ENCODE measurements at regions of chr22 and their contacts with region 1.

Region 1: DNA sequence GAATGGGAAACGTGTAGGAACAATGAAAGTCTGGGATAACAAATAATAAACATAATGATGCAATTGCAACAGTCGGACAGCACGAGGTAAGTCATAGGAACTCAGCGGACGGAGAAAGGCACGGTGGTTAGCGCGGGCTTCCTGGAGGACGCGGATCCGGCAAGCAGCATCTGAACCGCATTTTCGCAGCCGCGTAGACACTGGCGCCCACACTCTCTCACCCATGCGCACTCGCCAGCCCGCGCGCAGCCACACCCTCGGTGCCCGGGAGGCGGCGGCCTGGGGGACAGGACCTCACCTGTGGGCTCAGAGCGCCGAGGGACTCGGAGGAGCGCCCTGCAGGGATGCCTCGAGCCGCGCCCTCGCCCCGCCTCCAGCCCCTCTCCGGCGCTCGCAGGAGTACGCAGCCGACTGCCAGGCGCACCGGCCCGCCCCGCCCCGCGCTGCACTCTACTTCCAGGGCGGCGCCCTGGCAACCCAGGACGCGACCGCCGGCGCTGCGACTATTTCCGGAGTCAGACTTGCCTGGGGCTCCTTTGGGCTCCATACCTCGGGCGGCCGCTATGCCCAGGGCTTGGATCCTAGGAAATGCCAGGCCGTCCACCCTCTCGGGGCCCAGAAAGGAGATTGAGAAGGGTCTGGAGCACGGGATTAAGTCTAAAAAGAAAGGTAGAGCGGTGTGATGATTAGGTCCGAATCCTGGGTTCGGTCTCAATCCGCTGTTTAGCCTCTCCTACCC is at the start of gene TTLL1:
- DNase-seq: peak; percentile 84
- H3K4me3 ChIP-seq: peak within 1 kb of the TSS; percentile 38 to 91 (median 74)
- H3K27ac ChIP-seq: peak within 1 kb of the TSS; percentile 33
- H3K4me1 ChIP-seq: peaks cover 4% of the 10 kb centered on the region
- H3K27me3 ChIP-seq: no peaks in the 10 kb centered on the region
- CTCF ChIP-seq: peak in 1 of 2 donors; percentile 4
- POLR2A ChIP-seq: peak; percentile 70
- total RNA-seq, gene TTLL1: 9.0 and 11.2 TPM in 2 replicates

Region 2: GRCh38 chr22:42621505-42622002 is 467.6 kb before region 1 on chr22:
- CTCF ChIA-PET with region 1: interaction called, 19 read pairs
- POLR2A ChIA-PET with region 1: no interaction called
- dilution Hi-C with region 1: no loop called
- intact Hi-C with region 1: loop called (anchors 1 kb)
- DNase-seq: peak; percentile 51
- H3K4me3 ChIP-seq: no peak overlapping the region
- H3K27ac ChIP-seq: no peak overlapping the region
- H3K4me1 ChIP-seq: no peaks in the 10 kb centered on the region
- H3K27me3 ChIP-seq: no peaks in the 10 kb centered on the region
- CTCF ChIP-seq: peak; percentile 92 to 94
- POLR2A ChIP-seq: no peak

Region 3: GRCh38 chr22:42780070-42780540 is 309.0 kb before region 1 on chr22:
- CTCF ChIA-PET with region 1: interaction called, 9 read pairs
- POLR2A ChIA-PET with region 1: no interaction called
- dilution Hi-C with region 1: no loop called
- intact Hi-C with region 1: loop called (anchors 1 kb)
- DNase-seq: peak; percentile 92
- H3K4me3 ChIP-seq: no peak overlapping the region
- H3K27ac ChIP-seq: no peak overlapping the region
- H3K4me1 ChIP-seq: peaks cover 2% of the 10 kb centered on the region
- H3K27me3 ChIP-seq: no peaks in the 10 kb centered on the region
- CTCF ChIP-seq: peak; percentile 72 to 75
- POLR2A ChIP-seq: no peak

Region 4: DNA sequence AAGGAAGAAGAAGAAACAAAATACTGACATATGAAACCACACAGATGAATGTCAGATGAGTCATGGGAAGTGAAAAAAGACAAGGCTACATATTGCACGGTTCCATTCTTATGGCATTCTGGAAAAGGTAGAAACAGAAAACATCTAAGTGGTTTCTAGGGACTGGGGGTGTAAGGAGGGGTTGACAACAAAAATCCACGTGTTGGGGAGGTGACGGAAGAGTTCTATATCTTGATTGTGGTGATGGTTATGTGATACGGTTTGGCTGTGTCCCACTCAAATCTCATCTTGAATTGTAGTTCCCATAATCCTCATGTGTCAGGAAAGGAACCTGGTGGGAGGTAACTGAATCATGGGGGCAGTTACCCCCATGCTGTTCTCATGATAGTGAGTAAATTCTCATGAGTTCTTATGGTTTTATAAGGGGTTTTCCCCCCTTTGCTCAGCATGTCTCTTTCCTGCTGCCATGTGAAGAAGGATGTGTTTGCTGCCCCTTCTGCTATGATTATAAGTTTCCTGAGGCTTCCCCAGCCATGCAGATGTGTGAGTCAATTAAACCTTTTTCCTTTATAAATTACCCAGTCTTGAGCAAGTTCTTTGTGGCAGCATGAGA is 225.7 kb before region 1 on chr22:
- CTCF ChIA-PET with region 1: interaction called, 11 read pairs
- POLR2A ChIA-PET with region 1: no interaction called
- dilution Hi-C with region 1: no loop called
- intact Hi-C with region 1: loop called (anchors 5 kb)
- DNase-seq: peak; percentile 19
- H3K4me3 ChIP-seq: no peak overlapping the region
- H3K27ac ChIP-seq: no peak overlapping the region
- H3K4me1 ChIP-seq: no peaks in the 10 kb centered on the region
- H3K27me3 ChIP-seq: no peaks in the 10 kb centered on the region
- CTCF ChIP-seq: no peak
- POLR2A ChIP-seq: no peak

Region 5: GRCh38 chr22:42868751-42869251 is 220.3 kb before region 1 on chr22:
- CTCF ChIA-PET with region 1: interaction called, 11 read pairs
- POLR2A ChIA-PET with region 1: no interaction called
- dilution Hi-C with region 1: no loop called
- intact Hi-C with region 1: loop called (anchors 5 kb)
- DNase-seq: no peak
- H3K4me3 ChIP-seq: no peak overlapping the region
- H3K27ac ChIP-seq: no peak overlapping the region
- H3K4me1 ChIP-seq: no peaks in the 10 kb centered on the region
- H3K27me3 ChIP-seq: no peaks in the 10 kb centered on the region
- CTCF ChIP-seq: no peak
- POLR2A ChIP-seq: no peak

Region 6: DNA sequence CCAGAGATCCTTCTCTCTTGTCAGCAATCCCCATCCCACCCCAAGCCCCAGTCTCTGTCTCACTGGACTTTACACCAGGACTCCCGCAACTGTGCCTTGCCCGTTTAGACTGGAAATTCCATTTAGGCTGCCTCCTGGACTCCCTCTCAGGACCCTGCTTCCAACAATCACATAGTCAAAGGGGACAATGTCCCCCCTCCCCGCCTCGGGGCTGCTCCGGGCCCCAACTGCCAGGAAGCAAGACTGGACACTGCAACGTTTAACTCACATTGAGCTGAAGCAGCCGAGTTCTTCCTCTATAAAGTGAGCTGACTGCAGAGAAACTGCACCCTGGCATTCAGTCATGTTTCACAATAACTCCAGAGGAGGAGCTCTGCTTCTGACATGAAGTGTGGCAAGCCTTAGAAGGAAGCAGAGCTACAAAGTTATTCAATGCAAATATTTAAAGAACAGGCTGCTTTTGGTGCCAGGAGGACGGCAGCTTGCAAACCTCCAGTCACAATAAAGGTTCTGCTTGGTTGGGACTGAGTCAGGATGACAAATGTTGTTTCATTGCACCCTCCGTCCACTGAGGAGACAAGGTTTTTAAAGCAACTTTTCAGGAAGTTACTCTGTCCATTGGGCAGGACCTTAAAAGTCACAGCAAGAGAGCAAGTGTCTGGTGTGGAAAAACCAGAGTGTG is 94.1 kb before region 1 on chr22:
- CTCF ChIA-PET with region 1: interaction called, 17 read pairs
- POLR2A ChIA-PET with region 1: no interaction called
- dilution Hi-C with region 1: no loop called
- intact Hi-C with region 1: no loop called
- DNase-seq: peak; percentile 66
- H3K4me3 ChIP-seq: no peak overlapping the region
- H3K27ac ChIP-seq: no peak overlapping the region
- H3K4me1 ChIP-seq: peaks cover 35% of the 10 kb centered on the region
- H3K27me3 ChIP-seq: no peaks in the 10 kb centered on the region
- CTCF ChIP-seq: no peak
- POLR2A ChIP-seq: no peak

Region 7: GRCh38 chr22:43273902-43274484 is 184.8 kb after region 1 on chr22:
- CTCF ChIA-PET with region 1: no interaction called
- POLR2A ChIA-PET with region 1: no interaction called
- dilution Hi-C with region 1: no loop called
- intact Hi-C with region 1: no loop called
- DNase-seq: peak; percentile 57
- H3K4me3 ChIP-seq: no peak overlapping the region
- H3K27ac ChIP-seq: no peak overlapping the region
- H3K4me1 ChIP-seq: no peaks in the 10 kb centered on the region
- H3K27me3 ChIP-seq: no peaks in the 10 kb centered on the region
- CTCF ChIP-seq: peak; percentile 61 to 63
- POLR2A ChIP-seq: no peak